ENCODE measurements at regions of chr3 and their contacts with region 1.

Region 1: GRCh38 chr3:141231101-141231935 is at the start of gene PXYLP1:
- DNase-seq: peak; percentile 85 to 93 (median 88)
- H3K4me3 ChIP-seq: peak within 1 kb of the TSS; percentile 90
- H3K4me3 Mint-ChIP-seq: peak within 1 kb of the TSS; percentile 86 to 98 (median 93)
- H3K27ac ChIP-seq: peak within 1 kb of the TSS; percentile 75
- H3K27ac Mint-ChIP-seq: peak within 1 kb of the TSS; percentile 88 to 98 (median 97)
- H3K4me1 ChIP-seq: peaks cover 36% of the 10 kb centered on the region
- H3K4me1 Mint-ChIP-seq: peaks cover 38 to 52% (median 49%) of the 10 kb centered on the region in 3 donors
- H3K27me3 ChIP-seq: no peaks in the 10 kb centered on the region
- H3K27me3 Mint-ChIP-seq: no peaks in the 10 kb centered on the region
- total RNA-seq, gene PXYLP1: 6.6 to 9.5 TPM

Region 2: GRCh38 chr3:141192345-141192744 is 39.0 kb before region 1 on chr3:
- CTCF ChIA-PET with region 1: interaction called, 14 read pairs
- POLR2A ChIA-PET with region 1: interaction called, 3 read pairs
- DNase-seq: peak; percentile 87 to 96 (median 93)
- H3K4me3 ChIP-seq: no peak overlapping the region
- H3K4me3 Mint-ChIP-seq: no peak overlapping the region
- H3K27ac ChIP-seq: no peak overlapping the region
- H3K27ac Mint-ChIP-seq: peak overlapping the region in 5 of 8 donors; percentile 0 to 85 (median 23)
- H3K4me1 ChIP-seq: no peaks in the 10 kb centered on the region
- H3K4me1 Mint-ChIP-seq: peaks cover 5 to 13% (median 11%) of the 10 kb centered on the region in 3 donors
- H3K27me3 ChIP-seq: peaks cover 7% of the 10 kb centered on the region
- H3K27me3 Mint-ChIP-seq: peaks cover 25 to 30% of the 10 kb centered on the region in 2 donors

Region 3: DNA sequence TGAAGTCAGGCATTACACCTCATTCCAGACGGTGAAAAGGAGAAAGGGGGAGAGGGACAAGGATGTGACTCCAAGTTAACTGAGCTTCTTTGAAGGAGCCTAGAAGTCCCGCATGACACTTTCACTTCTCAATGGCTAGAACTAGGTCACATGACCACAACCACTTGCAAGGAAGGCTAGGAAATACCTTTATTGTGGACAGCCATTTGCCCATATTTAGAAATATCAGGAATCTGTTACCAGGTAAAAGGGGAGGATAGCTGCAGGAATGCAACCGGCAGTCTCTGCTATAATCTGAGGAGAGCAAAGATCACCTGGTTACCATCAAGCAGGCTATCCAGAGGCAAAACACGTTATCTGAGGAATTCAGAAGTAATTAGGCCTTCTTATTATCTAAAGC is 28.6 kb before region 1 on chr3:
- CTCF ChIA-PET with region 1: no interaction called
- POLR2A ChIA-PET with region 1: no interaction called
- DNase-seq: no peak
- H3K4me3 ChIP-seq: no peak overlapping the region
- H3K4me3 Mint-ChIP-seq: no peak overlapping the region
- H3K27ac ChIP-seq: no peak overlapping the region
- H3K27ac Mint-ChIP-seq: no peak overlapping the region
- H3K4me1 ChIP-seq: no peaks in the 10 kb centered on the region
- H3K4me1 Mint-ChIP-seq: no peaks in the 10 kb centered on the region
- H3K27me3 ChIP-seq: peaks cover 4% of the 10 kb centered on the region
- H3K27me3 Mint-ChIP-seq: peaks cover 8 to 12% of the 10 kb centered on the region in 2 donors

Region 4: DNA sequence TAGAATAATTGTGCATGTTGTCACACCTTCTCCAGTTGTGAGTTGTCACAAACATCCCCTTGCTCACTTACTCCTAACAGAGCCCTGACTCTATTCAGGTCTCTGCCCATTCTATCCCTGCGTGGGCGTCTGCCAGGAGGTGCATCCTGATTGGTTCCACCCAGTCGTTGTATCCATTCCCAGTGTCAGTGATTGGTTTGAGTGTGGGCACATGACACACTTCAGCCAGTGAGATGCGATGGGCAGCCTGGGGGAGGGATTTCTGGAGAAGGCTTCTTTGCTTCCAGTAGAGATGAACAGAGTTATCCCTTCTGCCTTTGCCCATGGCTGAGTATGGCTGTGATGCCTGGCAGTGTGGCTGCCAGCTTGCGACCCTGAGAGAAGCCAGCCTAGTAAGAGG is 19.0 kb after region 1 on chr3:
- CTCF ChIA-PET with region 1: interaction called, 28 read pairs
- POLR2A ChIA-PET with region 1: interaction called, 6 read pairs
- DNase-seq: no peak
- H3K4me3 ChIP-seq: no peak overlapping the region
- H3K4me3 Mint-ChIP-seq: no peak overlapping the region
- H3K27ac ChIP-seq: no peak overlapping the region
- H3K27ac Mint-ChIP-seq: no peak overlapping the region
- H3K4me1 ChIP-seq: no peaks in the 10 kb centered on the region
- H3K4me1 Mint-ChIP-seq: peaks cover 0 to 2% (median 0%) of the 10 kb centered on the region in 3 donors
- H3K27me3 ChIP-seq: no peaks in the 10 kb centered on the region
- H3K27me3 Mint-ChIP-seq: no peaks in the 10 kb centered on the region

Region 5: GRCh38 chr3:141266797-141267555 is 35.7 kb after region 1 on chr3:
- CTCF ChIA-PET with region 1: interaction called, 64 read pairs
- POLR2A ChIA-PET with region 1: interaction called, 87 read pairs
- DNase-seq: peak in 4 of 5 donors; percentile 19 to 74 (median 56)
- H3K4me3 ChIP-seq: peak overlapping the region; percentile 71
- H3K4me3 Mint-ChIP-seq: peak overlapping the region; percentile 88 to 98 (median 90)
- H3K27ac ChIP-seq: peak overlapping the region; percentile 34
- H3K27ac Mint-ChIP-seq: peak overlapping the region; percentile 93 to 98 (median 96)
- H3K4me1 ChIP-seq: peaks cover 30% of the 10 kb centered on the region
- H3K4me1 Mint-ChIP-seq: peaks cover 30 to 41% (median 33%) of the 10 kb centered on the region in 3 donors
- H3K27me3 ChIP-seq: no peaks in the 10 kb centered on the region
- H3K27me3 Mint-ChIP-seq: peaks cover 0 to 1% of the 10 kb centered on the region in 2 donors

Region 6: GRCh38 chr3:141279077-141279967 is 48.0 kb after region 1 on chr3:
- CTCF ChIA-PET with region 1: interaction called, 49 read pairs
- POLR2A ChIA-PET with region 1: interaction called, 12 read pairs
- DNase-seq: peak in 2 of 5 donors; percentile 18 to 39
- H3K4me3 ChIP-seq: no peak overlapping the region
- H3K4me3 Mint-ChIP-seq: peak overlapping the region in 1 of 7 donors; percentile 66
- H3K27ac ChIP-seq: no peak overlapping the region
- H3K27ac Mint-ChIP-seq: peak overlapping the region in 6 of 8 donors; percentile 8 to 70 (median 60)
- H3K4me1 ChIP-seq: peaks cover 19% of the 10 kb centered on the region
- H3K4me1 Mint-ChIP-seq: peaks cover 20 to 25% (median 21%) of the 10 kb centered on the region in 3 donors
- H3K27me3 ChIP-seq: no peaks in the 10 kb centered on the region
- H3K27me3 Mint-ChIP-seq: no peaks in the 10 kb centered on the region

Region 7: DNA sequence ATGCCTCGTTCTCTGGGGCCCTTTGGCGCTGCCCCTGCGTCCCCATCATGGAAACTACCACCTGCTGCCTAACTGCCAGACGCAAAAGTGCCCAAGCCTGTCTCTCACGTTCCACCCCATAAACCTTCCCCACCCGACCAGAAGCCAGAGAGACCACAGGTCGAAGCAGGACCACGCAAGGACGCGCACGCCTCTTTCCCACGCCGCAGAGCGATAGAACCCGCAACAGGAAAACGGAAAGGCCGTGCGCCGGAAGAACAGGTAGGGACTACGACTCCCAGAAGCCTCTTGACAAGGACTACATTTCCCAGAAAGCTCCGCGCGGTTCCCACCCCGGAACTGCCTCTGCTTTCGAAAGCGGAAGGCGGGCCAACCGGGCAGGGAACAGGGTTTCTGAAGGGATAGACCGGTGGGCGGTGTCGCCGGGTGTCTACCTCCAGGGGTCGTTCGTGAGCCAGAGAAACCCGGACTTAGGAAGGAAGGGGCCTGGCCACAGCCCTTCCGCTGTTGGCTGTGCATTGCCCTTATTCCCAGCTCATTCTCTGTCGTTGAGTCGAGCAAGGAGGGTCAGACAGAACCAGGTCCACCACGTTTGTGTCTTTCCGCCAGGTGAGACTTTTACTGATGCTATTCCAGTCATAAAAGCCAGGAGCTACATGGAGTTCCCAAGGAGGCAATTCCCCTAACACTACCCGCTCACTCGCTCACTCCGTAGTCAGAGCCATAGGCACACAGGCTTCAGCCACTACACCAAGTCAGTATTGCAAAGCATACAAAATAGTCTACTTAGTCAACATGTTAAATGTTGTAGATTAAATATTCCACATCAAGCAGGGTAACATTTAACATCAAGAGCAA is 80.4 kb after region 1 on chr3:
- CTCF ChIA-PET with region 1: interaction called, 7 read pairs
- POLR2A ChIA-PET with region 1: interaction called, 22 read pairs
- DNase-seq: peak; percentile 96 to 99 (median 98)
- H3K4me3 ChIP-seq: peak overlapping the region; percentile 58
- H3K4me3 Mint-ChIP-seq: peak overlapping the region; percentile 90 to 98 (median 95)
- H3K27ac ChIP-seq: peak overlapping the region; percentile 66
- H3K27ac Mint-ChIP-seq: peak overlapping the region; percentile 82 to 99 (median 97)
- H3K4me1 ChIP-seq: peaks cover 44% of the 10 kb centered on the region
- H3K4me1 Mint-ChIP-seq: peaks cover 44 to 53% (median 48%) of the 10 kb centered on the region in 3 donors
- H3K27me3 ChIP-seq: no peaks in the 10 kb centered on the region
- H3K27me3 Mint-ChIP-seq: peaks cover 0 to 1% of the 10 kb centered on the region in 2 donors